ENCODE measurements at regions of chr16 and their contacts with region 1.

Region 1: GRCh38 chr16:29805378-29806098 is 791 bp upstream of the MAZ start:
- DNase-seq: peak; percentile 95 to 98 (median 98)
- H3K4me3 ChIP-seq: peak overlapping the region; percentile 68 to 98 (median 90)
- H3K27ac ChIP-seq: peak overlapping the region; percentile 95 to 100 (median 99)
- H3K27me3 ChIP-seq: no peaks in the 10 kb centered on the region
- CTCF ChIP-seq: peak in 40 of 56 donors; percentile 1 to 58 (median 34)

Region 2: GRCh38 chr16:28950648-28951409 is 854.7 kb before region 1 on chr16 and contains the start of gene NFATC2IP:
- intact Hi-C with region 1: loop called in 1 of 2 experiments (anchors 5 kb)
- DNase-seq: peak; percentile 100
- H3K4me3 ChIP-seq: peak within 1 kb of the TSS; percentile 70 to 100 (median 96)
- H3K27ac ChIP-seq: peak within 1 kb of the TSS; percentile 1 to 93 (median 81)
- H3K27me3 ChIP-seq: no peaks in the 10 kb centered on the region
- CTCF ChIP-seq: peak in 17 of 56 donors; percentile 5 to 53 (median 22)
- total RNA-seq, gene NFATC2IP: 23.5 to 52.5 (median 35.3) TPM

Region 3: GRCh38 chr16:29653471-29653870 is 152.1 kb before region 1 on chr16:
- intact Hi-C with region 1: no loop called
- DNase-seq: no peak
- H3K4me3 ChIP-seq: no peak overlapping the region
- H3K27ac ChIP-seq: no peak overlapping the region
- H3K27me3 ChIP-seq: no peaks in the 10 kb centered on the region
- CTCF ChIP-seq: no peak

Region 4: DNA sequence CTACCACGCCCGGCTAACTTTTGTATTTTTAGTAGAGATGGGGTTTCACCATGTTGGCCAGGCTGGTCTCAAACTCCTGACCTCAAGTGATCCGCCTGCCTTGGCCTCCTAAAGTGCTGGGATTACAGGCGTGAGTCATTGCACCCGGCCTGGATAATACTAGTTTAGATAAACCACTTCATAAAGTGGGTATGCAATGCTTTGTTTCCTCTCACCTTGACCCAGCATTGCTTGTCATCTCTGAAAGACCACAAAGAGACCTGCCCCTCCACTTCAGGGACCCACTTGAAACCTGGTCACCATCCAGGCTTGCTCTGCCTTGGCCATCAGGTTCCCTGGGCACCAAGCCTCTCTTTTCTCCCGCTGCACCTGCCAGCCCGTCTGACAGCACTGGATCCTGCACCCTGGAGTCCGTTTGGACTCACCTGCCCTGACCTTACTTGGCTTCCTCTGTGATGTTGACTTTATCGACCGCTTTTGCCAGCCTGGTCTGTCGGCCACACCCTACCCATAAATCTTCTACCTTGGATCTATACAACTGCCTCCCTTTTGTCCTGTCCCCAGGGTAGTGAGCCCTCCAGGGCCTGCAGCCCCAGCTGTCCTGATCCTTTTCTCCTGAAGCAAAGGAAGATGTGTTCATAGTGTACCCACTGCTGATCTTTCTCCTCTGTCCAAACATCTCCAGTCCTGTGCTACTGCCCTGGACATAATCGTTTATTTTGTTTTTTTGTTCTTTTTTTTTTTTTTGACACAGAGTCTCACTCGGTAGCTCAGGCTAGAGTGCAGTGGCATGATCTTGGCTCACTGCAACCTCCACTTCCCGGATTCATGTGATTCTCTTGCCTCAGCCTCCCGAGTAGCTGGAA is 40.1 kb before region 1 on chr16:
- intact Hi-C with region 1: no loop called
- DNase-seq: no peak
- H3K4me3 ChIP-seq: no peak overlapping the region
- H3K27ac ChIP-seq: no peak overlapping the region
- H3K27me3 ChIP-seq: no peaks in the 10 kb centered on the region
- CTCF ChIP-seq: no peak

Region 5: DNA sequence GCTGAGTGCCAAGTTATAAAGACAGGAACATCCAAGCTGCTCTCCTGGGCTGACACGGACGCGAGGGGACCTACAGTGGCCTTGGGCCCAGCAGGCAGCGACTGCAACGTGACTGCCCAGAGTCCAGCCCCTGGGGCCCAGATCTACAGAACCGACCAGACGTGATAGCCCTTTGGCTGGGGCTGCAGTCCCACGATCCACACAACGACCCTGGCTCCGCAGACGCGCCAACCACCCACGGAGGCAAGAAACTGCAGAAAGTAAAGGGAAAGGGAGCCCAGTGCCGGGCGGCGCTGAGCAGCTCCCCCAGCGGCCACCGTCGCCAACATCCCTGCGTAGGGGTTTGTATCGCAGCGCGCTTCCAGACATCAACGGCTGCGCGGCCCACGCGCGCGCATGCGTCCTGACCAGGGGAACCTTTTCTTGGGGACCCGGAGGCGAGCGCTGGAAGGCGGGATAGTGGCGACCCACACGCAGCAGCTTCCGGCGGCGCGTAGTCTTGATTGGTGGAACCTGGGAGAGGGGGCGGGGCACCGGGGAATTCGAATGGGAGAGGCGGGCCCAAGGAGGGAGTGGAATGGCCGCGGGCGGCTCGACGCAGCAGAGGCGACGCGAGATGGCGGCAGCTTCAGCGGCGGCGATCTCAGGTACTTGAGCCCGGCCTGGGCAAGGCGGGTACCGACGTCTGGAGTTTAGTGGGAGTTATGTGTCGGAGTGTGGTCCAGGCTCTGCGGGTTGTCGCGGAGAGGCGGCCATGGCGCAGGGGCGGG is 15.2 kb before region 1 on chr16 and contains the start of gene KIF22:
- intact Hi-C with region 1: loop called (anchors 1 kb)
- DNase-seq: peak; percentile 98 to 100 (median 99)
- H3K4me3 ChIP-seq: peak within 1 kb of the TSS; percentile 66 to 100 (median 94)
- H3K27ac ChIP-seq: peak within 1 kb of the TSS; percentile 63 to 99 (median 93)
- H3K27me3 ChIP-seq: no peaks in the 10 kb centered on the region
- CTCF ChIP-seq: peak; percentile 49 to 89 (median 80)
- total RNA-seq, gene KIF22: 10.5 to 31.6 (median 21.6) TPM

Region 6: DNA sequence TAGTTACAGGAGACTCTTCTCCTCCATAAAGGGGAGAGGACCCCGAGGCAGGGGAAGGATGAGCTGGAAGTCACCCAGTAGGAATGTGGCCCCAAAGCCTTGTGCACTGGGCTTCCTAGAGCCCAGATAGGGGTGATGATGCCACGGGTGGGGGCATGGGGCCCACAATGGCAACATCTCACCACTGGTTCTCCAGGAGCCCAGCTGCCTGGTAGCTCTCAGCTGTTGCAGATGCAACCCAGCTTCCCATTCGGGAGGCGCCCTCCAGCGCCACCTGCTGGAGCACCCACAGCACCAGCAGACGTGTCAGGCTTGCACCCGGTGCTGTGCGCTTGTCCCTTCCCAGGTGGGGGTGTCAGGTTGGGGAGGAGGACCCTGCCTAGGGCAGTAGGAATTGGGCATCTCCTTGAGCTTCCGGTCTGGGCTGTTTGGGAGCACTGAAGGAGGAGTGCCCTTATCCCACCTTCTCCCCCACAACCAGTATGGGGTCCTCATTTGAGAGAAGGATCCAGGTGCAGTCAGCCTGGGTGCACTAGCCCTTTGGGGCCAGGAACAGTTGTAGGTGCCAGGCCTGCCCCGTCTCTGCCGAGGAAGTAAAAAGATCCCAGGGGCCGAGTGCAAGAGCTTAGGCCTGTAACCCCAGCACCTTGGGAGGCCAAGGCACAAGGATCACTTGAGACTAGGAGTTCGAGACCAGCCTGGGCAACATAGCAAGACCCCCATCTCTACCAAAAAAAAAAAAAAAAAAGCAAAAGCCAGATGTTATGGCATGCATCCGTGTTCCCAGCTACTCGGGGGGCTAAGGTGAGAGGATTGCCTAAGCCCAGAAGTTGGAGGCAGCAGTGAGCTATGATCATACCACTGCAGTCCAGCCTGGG is 43.1 kb after region 1 on chr16:
- intact Hi-C with region 1: loop called in 1 of 2 experiments (anchors 2 kb)
- DNase-seq: peak; percentile 56 to 84 (median 74)
- H3K4me3 ChIP-seq: no peak overlapping the region
- H3K27ac ChIP-seq: peak overlapping the region in 46 of 59 donors; percentile 1 to 78 (median 52)
- H3K27me3 ChIP-seq: no peaks in the 10 kb centered on the region
- CTCF ChIP-seq: peak; percentile 37 to 96 (median 85)

Region 7: DNA sequence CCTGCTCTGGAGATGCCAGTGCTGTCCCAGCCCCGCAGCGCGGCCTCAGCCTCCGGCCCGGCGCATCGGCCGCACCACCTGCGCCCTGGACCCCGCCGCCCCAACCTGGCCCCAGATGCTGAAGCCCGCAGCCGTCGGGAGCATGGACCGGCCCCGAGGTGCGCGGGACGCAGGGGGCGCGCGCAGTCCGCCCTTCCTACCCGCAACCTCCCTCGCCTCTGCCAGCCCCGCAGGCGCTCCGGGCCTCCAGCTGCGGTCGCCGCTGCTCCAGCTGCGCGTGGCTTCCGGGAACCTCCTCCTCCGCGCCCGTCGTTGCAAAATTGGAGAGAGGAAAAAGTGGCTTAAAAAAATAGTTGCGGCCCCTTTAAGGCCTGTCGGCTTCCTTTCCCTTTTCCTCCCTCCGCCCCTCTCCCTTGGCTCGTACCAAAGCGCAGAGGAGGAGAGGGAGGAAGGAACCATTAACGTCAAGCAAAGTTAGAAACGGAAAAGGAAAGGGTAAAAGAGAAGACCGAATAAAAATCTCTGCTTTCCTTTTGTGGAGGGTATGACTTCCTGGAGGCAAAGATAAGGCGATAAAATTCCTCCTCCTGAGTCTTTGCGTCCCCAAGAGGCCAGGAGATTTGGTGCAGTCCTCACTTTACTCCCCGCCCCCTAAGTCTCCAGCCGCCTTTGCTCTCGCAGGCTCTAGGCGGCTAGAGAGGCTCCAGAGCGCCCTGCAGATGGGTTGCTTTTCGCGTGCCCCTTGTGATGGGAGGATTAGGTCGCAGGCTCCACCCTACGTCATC is 57.5 kb after region 1 on chr16 and contains the start of gene CDIPT:
- intact Hi-C with region 1: no loop called
- DNase-seq: peak; percentile 83 to 97 (median 96)
- H3K4me3 ChIP-seq: peak within 1 kb of the TSS; percentile 64 to 100 (median 95)
- H3K27ac ChIP-seq: peak within 1 kb of the TSS; percentile 89 to 99 (median 97)
- H3K27me3 ChIP-seq: no peaks in the 10 kb centered on the region
- CTCF ChIP-seq: peak in 54 of 56 donors; percentile 29 to 84 (median 70)
- total RNA-seq, gene CDIPT: 63.9 to 118 (median 94.7) TPM

Region 8: DNA sequence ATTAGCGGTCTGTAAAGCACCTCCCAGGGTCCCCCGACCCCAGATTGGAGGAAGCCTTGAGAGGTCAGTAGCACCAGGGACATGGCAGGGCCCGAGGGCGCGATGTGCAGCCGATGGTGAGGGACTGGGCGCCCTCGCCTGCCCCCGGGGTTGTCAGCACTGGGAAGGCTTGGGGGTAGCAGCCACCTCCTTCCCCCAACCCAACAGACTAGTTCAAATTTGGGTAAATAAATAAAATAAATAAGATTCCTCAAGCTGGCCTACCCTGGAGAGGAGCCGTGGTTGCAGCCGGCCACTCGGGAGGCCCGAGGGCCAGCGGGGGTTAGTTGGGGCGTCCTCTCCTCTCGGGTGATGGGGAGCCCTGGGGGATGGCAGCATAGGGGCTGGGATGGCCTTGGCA is 218.9 kb after region 1 on chr16:
- intact Hi-C with region 1: loop called in 1 of 2 experiments (anchors 5 kb)
- DNase-seq: no peak
- H3K4me3 ChIP-seq: no peak overlapping the region
- H3K27ac ChIP-seq: no peak overlapping the region
- H3K27me3 ChIP-seq: peaks cover 0 to 3% (median 0%) of the 10 kb centered on the region in 45 donors
- CTCF ChIP-seq: no peak

Region 9: GRCh38 chr16:30065143-30065850 is 259.8 kb after region 1 on chr16 and contains the start of gene ALDOA:
- intact Hi-C with region 1: loop called in 1 of 2 experiments (anchors 5 kb)
- DNase-seq: peak; percentile 94 to 99 (median 98)
- H3K4me3 ChIP-seq: peak within 1 kb of the TSS; percentile 67 to 100 (median 96)
- H3K27ac ChIP-seq: peak within 1 kb of the TSS; percentile 91 to 100 (median 100)
- H3K27me3 ChIP-seq: no peaks in the 10 kb centered on the region
- CTCF ChIP-seq: peak in 42 of 56 donors; percentile 5 to 56 (median 32)
- total RNA-seq, gene ALDOA: 996 to 2,428 (median 1,936) TPM